Cardiac septum (tissue), 1 donor: ENCODE measurements at regions of chr1 and their contacts with region 1.

Region 1: GRCh38 chr1:169739980-169740379 is 6.1 kb upstream of the SELE start:
- DNase-seq: no peak

Region 2: DNA sequence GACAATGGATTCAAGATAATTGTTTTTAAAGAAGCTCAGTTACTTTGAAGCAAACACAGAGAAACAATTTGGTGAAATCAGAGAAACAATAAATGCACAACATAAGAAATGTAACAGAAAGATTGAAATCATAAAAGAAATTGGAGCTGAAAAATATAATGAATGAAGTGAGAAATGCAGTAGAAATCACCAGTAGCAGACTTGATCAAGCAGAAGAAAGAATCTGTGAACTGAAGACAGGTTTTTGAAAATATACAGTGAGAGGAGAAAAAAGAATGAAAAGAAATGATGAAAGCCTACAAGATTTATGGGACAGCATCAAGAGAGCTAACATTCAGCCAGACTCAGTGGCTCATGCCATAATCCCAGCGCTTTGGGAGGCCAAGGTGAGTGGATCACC is 105.8 kb before region 1 on chr1:
- intact Hi-C with region 1: no loop called
- DNase-seq: no peak

Region 3: GRCh38 chr1:169794530-169795416 is 54.8 kb after region 1 on chr1 and contains the start of gene METTL18:
- intact Hi-C with region 1: loop called (anchors 5 kb)
- DNase-seq: peak; percentile 96
- total RNA-seq, gene METTL18: 4.2 TPM